GM12878 (cell line): ENCODE measurements at regions of chr12 and their contacts with region 1.

Region 1: DNA sequence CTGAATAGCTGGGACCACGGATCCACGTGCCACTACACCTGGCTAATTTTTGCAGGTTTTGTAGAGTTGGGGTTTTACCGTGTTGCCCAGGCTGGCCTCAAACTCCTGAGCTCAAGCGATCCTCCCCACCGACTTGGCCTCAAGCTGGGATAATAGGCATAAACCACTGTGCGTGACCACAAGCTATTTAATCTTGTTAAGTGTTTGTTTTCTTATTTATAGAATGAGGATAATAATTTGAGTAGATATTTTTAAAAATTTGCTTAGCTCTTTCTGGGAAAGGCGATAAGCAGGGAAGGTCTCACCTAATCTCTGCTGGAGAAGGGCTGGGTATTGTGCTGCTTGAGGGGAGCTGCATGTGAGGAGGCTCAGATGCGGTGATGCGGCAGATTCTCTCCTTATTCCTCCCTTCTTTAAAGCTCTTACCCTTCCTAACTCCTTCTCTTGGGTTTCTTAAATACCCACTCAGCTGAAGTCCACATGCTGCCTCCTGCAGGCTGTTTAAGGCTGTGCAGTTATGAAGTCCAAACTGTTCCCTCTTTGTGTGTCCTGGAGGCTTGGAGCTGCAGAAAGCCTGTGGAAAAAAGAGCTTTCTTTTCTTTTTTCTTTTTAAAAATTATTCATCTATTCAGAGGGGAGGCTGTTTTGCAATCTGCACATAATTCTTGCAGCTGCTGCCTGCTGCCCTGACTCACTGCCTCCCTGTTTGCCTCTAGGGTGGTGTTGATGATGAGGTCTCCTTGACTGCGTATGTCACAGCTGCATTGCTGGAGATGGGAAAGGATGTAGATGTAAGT is 37.9 kb downstream of the A2ML1 start:
- DNase-seq: no peak
- ATAC-seq: peak; percentile 60; the same call in 2 of the 3 replicates
- H3K4me3 ChIP-seq: no peak overlapping the region
- H3K27ac ChIP-seq: no peak overlapping the region
- H3K4me1 ChIP-seq: no peaks in the 10 kb centered on the region
- H3K27me3 ChIP-seq: 0 out of 4 replicates have a peak, but pooled peaks cover 0 to 3% of the 10 kb centered on the region in 2 experiments
- CTCF ChIP-seq: peak; percentile 51 to 67 (median 55)
- EP300 ChIP-seq: no peak
- POLR2A ChIP-seq: no peak
- RAD21 ChIP-seq: peak; percentile 63

Region 2: DNA sequence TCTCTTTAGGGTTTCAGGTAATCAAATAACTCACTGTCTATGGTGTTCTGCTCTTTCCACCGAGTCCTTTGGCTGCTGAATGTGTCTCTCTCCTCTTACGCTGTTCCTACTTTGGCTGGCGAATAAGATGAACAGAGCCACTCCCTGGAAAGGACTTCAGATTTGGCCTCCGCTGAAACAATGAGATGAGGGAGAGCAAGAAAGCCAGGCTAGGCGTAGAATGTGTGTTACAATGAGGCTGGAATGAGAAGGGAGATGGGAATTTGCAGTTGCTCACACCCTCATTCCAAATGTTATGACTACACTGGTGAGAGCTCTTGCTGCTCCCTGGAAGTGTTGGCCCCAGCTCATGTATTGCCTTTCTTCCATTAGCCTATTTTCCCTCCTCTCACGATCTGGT is 197.8 kb before region 1 on chr12 and contains the start of gene MFAP5:
- CTCF ChIA-PET with region 1: interaction called, 18 read pairs
- POLR2A ChIA-PET with region 1: no interaction called
- RAD21 ChIA-PET with region 1: interaction called, 14 read pairs
- SMC1A ChIA-PET with region 1: interaction called, 15 read pairs
- in situ Hi-C with region 1: no loop called
- intact Hi-C with region 1: no loop called
- DNase-seq: no peak
- ATAC-seq: no peak
- H3K4me3 ChIP-seq: no peak within 1 kb of the TSS
- H3K27ac ChIP-seq: no peak within 1 kb of the TSS
- H3K4me1 ChIP-seq: no peaks in the 10 kb centered on the region
- H3K27me3 ChIP-seq: peaks cover 0 to 5% of the 10 kb centered on the region in 2 experiments; a peak in 2 of 4 replicates
- CTCF ChIP-seq: no peak
- EP300 ChIP-seq: no peak
- POLR2A ChIP-seq: no peak
- RAD21 ChIP-seq: no peak
- polyA plus RNA-seq, gene MFAP5: not detected

Region 3: DNA sequence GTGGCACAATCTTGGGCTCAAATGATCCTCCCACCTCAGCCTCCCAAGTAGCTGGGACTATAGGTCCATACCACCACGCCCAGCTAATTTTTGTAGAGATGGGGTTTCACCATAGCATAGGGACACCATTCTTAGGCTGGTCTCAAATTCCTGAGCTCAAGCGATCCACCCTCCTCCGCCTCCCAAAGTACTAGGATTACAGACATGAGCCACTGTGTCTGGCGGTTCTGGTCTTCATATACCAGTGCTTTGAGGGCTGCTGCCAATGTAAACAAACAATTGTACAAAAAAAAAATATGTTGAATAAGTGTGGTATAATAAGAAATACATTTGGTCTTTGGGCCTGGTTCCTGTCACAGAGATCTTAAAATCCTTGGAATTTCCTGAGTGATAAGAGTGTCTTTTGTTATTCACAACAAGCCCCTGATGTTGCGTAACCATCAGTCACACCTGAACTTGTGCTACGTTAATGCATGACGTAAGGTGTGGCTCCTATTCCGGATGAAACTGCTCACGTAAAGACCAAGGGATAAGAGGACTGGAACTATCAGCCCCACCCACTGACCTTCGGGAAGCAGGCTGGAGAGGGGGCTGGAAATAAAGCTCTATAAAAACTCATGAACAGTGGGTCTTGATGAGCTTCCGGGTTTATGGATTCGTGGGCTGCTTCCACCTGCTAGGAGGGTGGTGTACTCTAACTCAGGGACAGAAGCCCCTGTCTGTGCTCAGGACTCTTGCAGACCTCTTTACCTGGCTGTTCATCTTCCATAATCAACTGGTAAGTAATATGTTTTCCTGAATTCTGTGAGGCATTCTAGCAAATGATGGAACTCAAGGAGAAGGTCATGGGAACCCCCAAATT is 179.1 kb before region 1 on chr12:
- CTCF ChIA-PET with region 1: interaction called, 13 read pairs
- POLR2A ChIA-PET with region 1: no interaction called
- RAD21 ChIA-PET with region 1: interaction called, 4 read pairs
- SMC1A ChIA-PET with region 1: interaction called, 4 read pairs
- in situ Hi-C with region 1: no loop called
- intact Hi-C with region 1: no loop called
- DNase-seq: no peak
- ATAC-seq: no peak
- H3K4me3 ChIP-seq: no peak overlapping the region
- H3K27ac ChIP-seq: no peak overlapping the region
- H3K4me1 ChIP-seq: no peaks in the 10 kb centered on the region
- H3K27me3 ChIP-seq: no peaks in the 10 kb centered on the region
- CTCF ChIP-seq: no peak
- EP300 ChIP-seq: no peak
- POLR2A ChIP-seq: no peak
- RAD21 ChIP-seq: no peak

Region 4: DNA sequence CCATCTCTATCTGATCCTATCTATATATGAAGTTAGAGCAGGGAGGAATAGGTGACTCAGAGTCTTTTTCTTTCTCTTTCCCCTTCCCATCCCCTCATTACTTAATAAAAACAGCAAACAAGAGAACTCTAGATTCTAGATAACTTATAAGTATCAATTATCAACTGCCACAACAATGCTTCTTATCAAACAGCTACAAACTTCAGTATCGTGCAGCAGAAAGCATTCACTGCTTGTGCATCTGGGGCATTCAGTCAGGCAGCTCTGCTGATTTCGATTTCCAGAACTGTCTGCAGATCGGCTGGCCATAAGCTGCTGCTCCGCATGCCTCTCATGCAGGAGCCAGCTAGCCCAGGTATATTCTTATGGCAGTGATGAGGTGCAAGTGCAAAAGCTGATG is 18.6 kb before region 1 on chr12:
- CTCF ChIA-PET with region 1: interaction called, 11 read pairs
- POLR2A ChIA-PET with region 1: no interaction called
- RAD21 ChIA-PET with region 1: no interaction called
- SMC1A ChIA-PET with region 1: interaction called, 4 read pairs
- in situ Hi-C with region 1: no loop called
- intact Hi-C with region 1: no loop called
- DNase-seq: no peak
- ATAC-seq: no peak
- H3K4me3 ChIP-seq: no peak overlapping the region
- H3K27ac ChIP-seq: no peak overlapping the region
- H3K4me1 ChIP-seq: no peaks in the 10 kb centered on the region
- H3K27me3 ChIP-seq: no peaks in the 10 kb centered on the region; a peak in 1 of 4 replicates
- CTCF ChIP-seq: no peak
- EP300 ChIP-seq: no peak
- POLR2A ChIP-seq: no peak
- RAD21 ChIP-seq: no peak

Region 5: DNA sequence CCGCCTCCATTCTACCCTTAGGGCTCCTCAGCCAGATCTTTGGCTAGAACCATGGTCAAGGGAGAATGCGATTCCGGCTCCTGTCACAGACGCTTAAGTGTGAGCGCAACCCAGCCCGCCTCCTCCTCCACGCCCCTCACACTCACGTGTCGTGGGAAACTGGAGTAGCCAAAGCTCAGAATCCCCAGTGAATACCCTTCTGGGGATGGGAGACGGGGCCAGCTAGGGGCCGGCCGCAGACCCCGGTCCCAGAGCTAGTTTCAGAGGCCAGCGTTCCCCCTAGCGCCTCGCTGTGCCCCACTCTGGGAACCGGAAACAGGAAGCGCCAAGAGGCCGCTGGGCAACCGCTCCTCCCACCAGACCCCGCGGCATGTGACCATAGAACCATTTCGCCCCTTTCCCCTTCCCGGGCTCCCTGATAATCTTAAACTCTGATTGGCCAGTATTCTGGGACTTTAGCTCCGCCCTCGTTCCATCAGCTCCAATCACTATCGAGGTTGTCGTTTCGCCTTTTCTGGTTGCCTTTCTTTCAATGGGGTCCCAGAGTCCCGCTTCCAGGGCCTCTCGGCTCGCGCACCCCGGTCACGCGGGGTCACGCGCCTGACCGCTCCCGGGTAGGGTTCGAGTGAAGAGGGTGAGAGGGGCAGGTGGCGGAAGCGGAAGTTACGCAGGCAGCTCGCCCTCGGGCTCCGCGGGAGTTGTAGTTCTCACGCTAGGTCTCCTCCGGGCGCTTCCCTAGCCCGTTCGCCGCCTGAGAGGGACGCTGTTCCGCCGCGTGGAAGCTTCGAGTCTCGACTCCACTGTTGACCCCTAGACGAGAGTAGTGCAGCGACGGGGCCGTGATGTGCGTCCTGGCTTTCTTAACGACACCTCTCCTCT is 89.2 kb after region 1 on chr12 and contains the start of gene M6PR:
- CTCF ChIA-PET with region 1: no interaction called
- POLR2A ChIA-PET with region 1: no interaction called
- RAD21 ChIA-PET with region 1: no interaction called
- SMC1A ChIA-PET with region 1: no interaction called
- in situ Hi-C with region 1: no loop called
- intact Hi-C with region 1: no loop called
- DNase-seq: peak; percentile 94
- ATAC-seq: peak; percentile 90
- H3K4me3 ChIP-seq: peak within 1 kb of the TSS; percentile 86
- H3K27ac ChIP-seq: peak within 1 kb of the TSS; percentile 94
- H3K4me1 ChIP-seq: peaks cover 10% of the 10 kb centered on the region; the same call in 1 of the 2 replicates
- H3K27me3 ChIP-seq: no peaks in the 10 kb centered on the region
- CTCF ChIP-seq: peak; percentile 63 to 84 (median 71)
- EP300 ChIP-seq: 0 out of 4 replicates have a peak, but pooled peaks of 1 of the 2 experiments have one; percentile 39
- POLR2A ChIP-seq: peak; percentile 81
- RAD21 ChIP-seq: peak; percentile 67
- polyA plus RNA-seq, gene M6PR: 65.4 to 101 TPM

Region 6: DNA sequence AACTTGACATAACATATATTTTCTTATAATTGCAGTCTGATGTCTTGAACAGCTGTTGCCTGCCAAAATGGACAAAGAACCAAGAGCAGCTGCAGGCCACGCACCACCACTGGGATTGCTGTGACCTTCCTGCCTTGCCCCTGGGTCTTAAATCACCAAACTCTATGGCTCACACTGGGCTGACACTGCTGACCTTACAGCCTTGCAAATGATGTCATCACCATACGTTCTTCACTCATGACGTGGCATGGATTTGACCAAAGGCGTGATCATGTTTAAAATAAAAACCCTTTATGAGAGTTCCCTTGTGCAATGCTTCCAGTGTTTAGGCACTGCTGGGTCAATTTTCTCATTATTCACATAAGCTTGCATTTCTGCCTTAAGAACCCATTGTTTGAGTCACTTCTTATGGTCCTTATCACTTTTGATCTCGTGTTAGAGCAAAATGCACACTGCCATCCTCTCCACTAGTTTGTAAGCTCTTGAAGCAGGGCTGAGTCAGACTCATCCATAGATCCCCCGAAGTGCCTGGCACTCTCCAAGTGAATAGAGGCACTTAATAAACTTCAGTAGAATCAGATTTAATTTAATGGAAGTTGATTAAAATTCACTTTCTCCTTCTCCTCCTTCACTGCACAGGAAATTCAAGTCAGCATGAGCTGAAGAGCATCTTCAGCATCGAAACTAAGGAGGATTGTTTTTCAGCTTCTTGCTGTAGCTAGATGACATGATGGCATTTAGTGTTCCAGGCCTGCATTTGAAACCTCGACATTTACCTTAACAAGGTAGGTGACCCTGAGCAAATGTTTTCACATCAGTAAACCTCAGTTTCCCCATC is 480.3 kb after region 1 on chr12:
- CTCF ChIA-PET with region 1: no interaction called
- POLR2A ChIA-PET with region 1: no interaction called
- RAD21 ChIA-PET with region 1: no interaction called
- SMC1A ChIA-PET with region 1: no interaction called
- in situ Hi-C with region 1: no loop called
- intact Hi-C with region 1: no loop called
- DNase-seq: no peak
- ATAC-seq: no peak
- H3K4me3 ChIP-seq: no peak overlapping the region
- H3K27ac ChIP-seq: no peak overlapping the region
- H3K4me1 ChIP-seq: no peaks in the 10 kb centered on the region
- H3K27me3 ChIP-seq: peaks cover 0 to 2% of the 10 kb centered on the region in 2 experiments; a peak in 1 of 4 replicates
- CTCF ChIP-seq: no peak
- EP300 ChIP-seq: no peak
- POLR2A ChIP-seq: no peak
- RAD21 ChIP-seq: no peak

Region 7: DNA sequence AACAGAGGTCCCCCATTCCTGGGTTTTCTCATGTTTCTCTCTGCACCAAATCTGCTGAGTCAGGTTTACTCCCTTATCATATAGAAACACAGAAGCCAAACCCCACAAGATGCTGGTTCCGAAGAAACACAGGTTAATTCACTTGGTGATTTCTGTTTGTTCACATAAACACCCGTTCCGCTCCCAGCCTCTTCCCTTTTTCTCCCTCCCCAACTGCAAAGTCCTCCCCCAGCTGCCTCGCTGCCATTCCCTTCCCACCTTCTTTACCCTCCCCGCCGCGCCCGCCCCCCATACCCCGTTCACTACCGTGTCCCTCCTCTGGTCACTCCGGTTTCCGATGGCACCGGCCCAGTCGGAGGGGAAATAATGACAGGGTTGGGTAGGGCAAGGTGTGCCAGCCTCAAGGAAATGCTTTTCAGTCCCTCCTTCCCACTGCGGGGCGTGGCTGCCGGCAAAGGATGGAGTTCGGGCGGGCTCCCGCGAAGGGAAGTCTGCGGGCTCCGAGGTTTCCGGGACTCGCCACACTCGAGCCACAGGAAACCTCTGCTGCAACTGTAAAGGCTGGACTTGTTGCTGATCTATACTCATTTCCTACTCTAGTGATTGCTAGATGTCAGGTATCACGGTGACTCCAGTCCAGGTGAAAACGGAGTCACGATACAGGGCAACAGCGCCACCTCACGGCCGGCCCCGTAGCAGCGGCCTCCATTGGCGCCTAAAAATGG is 1813.5 kb after region 1 on chr12 and contains the start of gene STYK1:
- CTCF ChIA-PET with region 1: no interaction called
- POLR2A ChIA-PET with region 1: no interaction called
- RAD21 ChIA-PET with region 1: no interaction called
- SMC1A ChIA-PET with region 1: no interaction called
- in situ Hi-C with region 1: no loop called
- intact Hi-C with region 1: no loop called
- DNase-seq: peak; percentile 24
- ATAC-seq: peak; percentile 84
- H3K4me3 ChIP-seq: peak within 1 kb of the TSS; percentile 32
- H3K27ac ChIP-seq: no peak within 1 kb of the TSS
- H3K4me1 ChIP-seq: peaks cover 14% of the 10 kb centered on the region; the same call in 1 of the 2 replicates
- H3K27me3 ChIP-seq: peaks cover 0 to 2% of the 10 kb centered on the region in 2 experiments; a peak in 1 of 4 replicates
- CTCF ChIP-seq: peak; percentile 81 to 87 (median 83)
- EP300 ChIP-seq: no peak
- POLR2A ChIP-seq: no peak
- RAD21 ChIP-seq: peak; percentile 83
- polyA plus RNA-seq, gene STYK1: 0.73 to 0.87 TPM